T-cell (primary cell): ENCODE measurements at regions of chr1 and their contacts with region 1.

Region 1: GRCh38 chr1:40153073-40153770 is 8.0 kb upstream of the RLF start:
- DNase-seq: peak in 20 of 35 experiments; percentile 9 to 83 (median 24)
- ATAC-seq: peak; percentile 57 to 81 (median 70)
- H3K4me3 ChIP-seq: no peak overlapping the region
- H3K4me3 Mint-ChIP-seq: peak overlapping the region in 2 of 3 donors; percentile 14 to 23
- H3K27ac ChIP-seq: no peak overlapping the region
- H3K27ac Mint-ChIP-seq: peak overlapping the region; percentile 40 to 82
- H3K4me1 ChIP-seq: no peaks in the 10 kb centered on the region
- H3K4me1 Mint-ChIP-seq: peaks cover 5 to 10% (median 6%) of the 10 kb centered on the region in 3 donors
- H3K27me3 ChIP-seq: no peaks in the 10 kb centered on the region
- H3K27me3 Mint-ChIP-seq: peaks cover 4% of the 10 kb centered on the region in 2 donors

Region 2: DNA sequence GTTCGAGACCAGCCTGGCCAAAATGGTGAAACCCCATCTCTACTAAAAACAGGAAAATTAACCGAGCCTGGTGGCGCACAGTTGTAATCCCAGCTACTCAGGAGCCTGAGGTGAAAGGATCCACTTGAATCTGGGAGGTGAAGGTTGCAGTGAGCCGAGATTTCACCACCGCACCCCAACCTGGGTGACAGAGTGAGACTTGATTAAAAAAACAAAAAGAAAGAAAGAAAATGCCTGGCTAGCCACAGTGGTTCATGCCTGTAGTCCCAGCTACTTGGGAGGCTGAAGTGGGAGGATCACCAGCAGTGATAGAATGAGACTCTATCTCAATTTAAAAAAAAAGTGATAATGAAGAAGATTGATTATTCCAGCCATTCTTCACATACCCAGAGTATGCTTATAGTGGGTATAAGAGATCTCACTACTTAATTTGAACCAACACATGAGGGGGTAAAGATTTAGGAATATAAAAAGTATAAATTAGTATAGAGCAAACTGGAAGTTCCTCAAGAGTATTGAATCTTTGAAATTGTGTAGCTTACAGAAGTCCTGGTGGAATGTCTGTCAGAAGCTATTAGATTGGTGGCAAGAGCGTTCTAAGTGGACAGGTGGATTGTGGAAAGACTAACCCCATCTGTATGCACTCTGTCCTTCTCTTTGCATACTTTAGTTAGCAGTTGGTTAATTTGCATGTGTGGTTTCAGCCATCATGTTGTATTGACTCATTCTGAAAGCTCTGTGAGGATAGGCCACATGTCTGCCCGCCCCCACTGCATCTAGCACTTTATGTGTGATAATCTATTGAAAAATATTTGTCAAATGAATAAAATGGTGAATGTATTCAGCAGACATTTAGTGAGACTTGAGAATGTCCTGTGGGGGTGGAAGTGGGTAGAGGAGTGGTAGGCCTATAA is 33.0 kb after region 1 on chr1:
- CTCF ChIA-PET with region 1: interaction called, 4 to 13 read pairs
- POLR2A ChIA-PET with region 1: interaction called in 1 of 2 experiments, 3 read pairs
- DNase-seq: peak in 16 of 35 experiments; percentile 3 to 40 (median 8)
- ATAC-seq: peak in 3 of 4 experiments; percentile 38 to 58 (median 53)
- H3K4me3 ChIP-seq: no peak overlapping the region
- H3K4me3 Mint-ChIP-seq: peak overlapping the region in 1 of 3 donors; percentile 37
- H3K27ac ChIP-seq: peak overlapping the region; percentile 27
- H3K27ac Mint-ChIP-seq: peak overlapping the region; percentile 20 to 44
- H3K4me1 ChIP-seq: peaks cover 7 to 15% of the 10 kb centered on the region in 2 experiments
- H3K4me1 Mint-ChIP-seq: peaks cover 53 to 61% (median 53%) of the 10 kb centered on the region in 3 donors
- H3K27me3 ChIP-seq: no peaks in the 10 kb centered on the region
- H3K27me3 Mint-ChIP-seq: no peaks in the 10 kb centered on the region

Region 3: DNA sequence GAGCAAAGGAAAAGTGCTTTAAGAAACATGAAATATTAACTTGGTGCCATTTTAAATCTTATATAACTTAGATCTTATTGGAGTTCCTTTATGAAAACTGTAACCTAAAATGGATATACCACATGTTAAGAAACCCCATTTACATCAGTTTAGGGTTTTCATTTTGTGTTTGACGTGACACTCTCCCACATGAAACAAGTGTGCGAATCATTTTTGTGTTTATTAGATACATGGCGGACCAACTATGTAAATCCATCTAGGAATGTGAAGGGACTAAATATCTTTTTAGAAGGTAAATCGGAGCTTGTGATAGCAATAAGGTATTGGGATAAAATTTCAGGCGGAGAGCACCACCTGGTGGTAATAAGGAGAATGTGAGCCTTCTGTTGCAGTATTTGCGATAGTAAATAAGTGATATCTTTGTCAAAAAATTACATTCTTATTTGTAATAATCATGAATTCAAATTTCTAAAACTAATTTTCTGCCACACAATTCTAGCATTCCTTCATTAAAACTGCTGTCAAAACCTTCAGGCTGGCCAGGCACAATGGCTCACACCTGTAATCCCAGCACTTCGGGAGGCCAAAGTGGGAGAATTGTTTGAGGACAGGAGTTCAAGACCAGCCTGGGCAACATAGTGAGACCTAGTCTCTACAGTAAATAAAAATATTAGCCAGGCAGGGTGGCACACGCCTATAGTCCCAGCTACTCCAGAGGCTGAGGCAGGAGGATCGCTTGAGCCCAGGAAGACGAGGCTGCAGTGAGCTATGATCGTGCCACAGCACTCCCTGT is 251.6 kb after region 1 on chr1:
- CTCF ChIA-PET with region 1: interaction called, 5 to 33 read pairs
- POLR2A ChIA-PET with region 1: no interaction called
- DNase-seq: peak in 21 of 35 experiments; percentile 18 to 87 (median 48)
- ATAC-seq: peak; percentile 62 to 82 (median 70)
- H3K4me3 ChIP-seq: no peak overlapping the region
- H3K4me3 Mint-ChIP-seq: peak overlapping the region; percentile 44 to 57 (median 49)
- H3K27ac ChIP-seq: peak overlapping the region; percentile 87
- H3K27ac Mint-ChIP-seq: peak overlapping the region; percentile 75 to 88
- H3K4me1 ChIP-seq: peaks cover 30 to 44% of the 10 kb centered on the region in 2 experiments
- H3K4me1 Mint-ChIP-seq: peaks cover 76 to 82% (median 79%) of the 10 kb centered on the region in 3 donors
- H3K27me3 ChIP-seq: no peaks in the 10 kb centered on the region
- H3K27me3 Mint-ChIP-seq: no peaks in the 10 kb centered on the region

Region 4: DNA sequence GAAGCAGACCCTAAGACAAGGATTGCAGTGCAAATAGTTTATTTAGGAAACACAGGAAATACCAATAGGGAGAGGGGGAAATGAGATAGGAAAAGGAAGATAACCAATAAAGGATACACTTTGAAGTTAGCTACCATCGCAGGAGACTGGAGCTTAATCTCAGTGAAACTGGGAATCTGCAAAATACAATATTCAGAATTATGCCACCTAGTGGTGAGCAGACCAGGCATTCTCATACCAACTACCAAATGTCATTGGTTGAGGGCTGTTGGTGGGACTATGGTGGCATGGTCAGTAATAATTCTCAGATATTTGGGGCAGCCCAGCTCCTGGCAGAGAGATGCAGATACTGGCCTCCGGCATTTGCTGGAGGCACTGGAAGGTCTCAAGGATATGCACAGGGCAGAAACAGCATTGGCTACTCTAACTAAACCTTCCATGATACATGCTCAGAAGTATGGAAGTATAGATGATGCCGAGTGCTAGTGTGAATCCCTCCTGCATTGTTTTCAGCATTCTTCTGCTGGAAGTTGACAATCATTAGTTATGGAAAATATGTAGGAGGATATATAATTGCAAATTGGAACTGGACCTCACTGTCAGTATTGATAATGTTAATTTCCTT is 285.3 kb after region 1 on chr1:
- CTCF ChIA-PET with region 1: interaction called, 4 to 18 read pairs
- POLR2A ChIA-PET with region 1: interaction called in 1 of 2 experiments, 5 read pairs
- DNase-seq: peak in 9 of 35 experiments; percentile 10 to 62 (median 14)
- ATAC-seq: peak; percentile 32 to 55 (median 46)
- H3K4me3 ChIP-seq: no peak overlapping the region
- H3K4me3 Mint-ChIP-seq: no peak overlapping the region
- H3K27ac ChIP-seq: no peak overlapping the region
- H3K27ac Mint-ChIP-seq: no peak overlapping the region
- H3K4me1 ChIP-seq: no peaks in the 10 kb centered on the region
- H3K4me1 Mint-ChIP-seq: peaks cover 3 to 10% (median 5%) of the 10 kb centered on the region in 3 donors
- H3K27me3 ChIP-seq: no peaks in the 10 kb centered on the region
- H3K27me3 Mint-ChIP-seq: no peaks in the 10 kb centered on the region